WTC11 (cell line): ENCODE measurements at regions of chr17 and their contacts with region 1.

Region 1: DNA sequence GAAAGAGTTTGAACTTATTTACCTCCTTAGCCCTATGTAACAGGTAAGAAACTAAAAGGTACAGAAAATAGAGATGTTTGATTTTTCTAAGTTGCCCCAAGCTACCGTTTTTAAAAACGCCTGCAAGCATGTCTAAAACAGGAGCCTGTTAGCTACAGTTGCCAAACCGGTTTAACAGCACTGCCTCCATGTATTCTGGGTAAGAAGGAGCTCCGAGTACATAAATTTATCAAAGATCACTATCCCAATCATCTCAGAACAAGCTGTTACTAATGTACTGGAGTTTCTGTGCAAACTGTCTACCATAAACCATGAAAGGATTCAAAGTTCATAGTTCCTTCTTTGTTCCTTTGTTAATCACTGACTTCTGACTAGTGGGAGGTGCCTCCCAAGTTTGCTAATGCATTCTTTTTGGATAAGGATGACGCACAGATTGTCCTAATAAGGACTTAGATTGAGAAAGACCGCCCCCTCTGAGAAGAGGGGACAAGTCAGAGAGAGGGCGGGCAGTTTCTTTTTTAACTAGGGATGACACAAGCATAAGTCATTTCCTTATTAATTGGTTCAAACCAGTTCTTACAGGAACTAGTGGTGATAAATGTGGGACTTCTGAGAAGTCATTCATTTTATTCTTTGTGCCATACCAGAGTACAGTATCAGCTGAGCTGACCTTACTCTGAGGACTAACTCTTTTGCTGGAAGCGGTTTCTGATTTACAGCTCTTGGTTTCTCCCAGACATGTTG is 55.3 kb downstream of the TUBD1 start:
- DNase-seq: peak; percentile 54
- ATAC-seq: peak; percentile 87
- H3K4me3 Mint-ChIP-seq: peak overlapping the region; percentile 94
- H3K27ac Mint-ChIP-seq: peak overlapping the region; percentile 99
- H3K4me1 Mint-ChIP-seq: peaks cover 49% of the 10 kb centered on the region
- H3K27me3 Mint-ChIP-seq: no peaks in the 10 kb centered on the region
- CTCF ChIP-seq: no peak

Region 2: GRCh38 chr17:59707114-59707970 is 130.1 kb before region 1 on chr17 and contains the starts of genes PTRH2 and VMP1:
- CTCF ChIA-PET with region 1: interaction called, 3 read pairs
- POLR2A ChIA-PET with region 1: interaction called, 10 read pairs
- DNase-seq: peak; percentile 98
- ATAC-seq: peak; percentile 99
- H3K4me3 Mint-ChIP-seq: peak within 1 kb of the TSS; percentile 98
- H3K27ac Mint-ChIP-seq: peak within 1 kb of the TSS; percentile 98
- H3K4me1 Mint-ChIP-seq: peaks cover 30% of the 10 kb centered on the region
- H3K27me3 Mint-ChIP-seq: no peaks in the 10 kb centered on the region
- CTCF ChIP-seq: no peak
- total RNA-seq, gene PTRH2: 30.0 to 32.6 TPM (median 30.5 TPM) in 3 replicates
- total RNA-seq, gene VMP1: 72.8 to 79.1 TPM (median 72.9 TPM) in 3 replicates

Region 3: DNA sequence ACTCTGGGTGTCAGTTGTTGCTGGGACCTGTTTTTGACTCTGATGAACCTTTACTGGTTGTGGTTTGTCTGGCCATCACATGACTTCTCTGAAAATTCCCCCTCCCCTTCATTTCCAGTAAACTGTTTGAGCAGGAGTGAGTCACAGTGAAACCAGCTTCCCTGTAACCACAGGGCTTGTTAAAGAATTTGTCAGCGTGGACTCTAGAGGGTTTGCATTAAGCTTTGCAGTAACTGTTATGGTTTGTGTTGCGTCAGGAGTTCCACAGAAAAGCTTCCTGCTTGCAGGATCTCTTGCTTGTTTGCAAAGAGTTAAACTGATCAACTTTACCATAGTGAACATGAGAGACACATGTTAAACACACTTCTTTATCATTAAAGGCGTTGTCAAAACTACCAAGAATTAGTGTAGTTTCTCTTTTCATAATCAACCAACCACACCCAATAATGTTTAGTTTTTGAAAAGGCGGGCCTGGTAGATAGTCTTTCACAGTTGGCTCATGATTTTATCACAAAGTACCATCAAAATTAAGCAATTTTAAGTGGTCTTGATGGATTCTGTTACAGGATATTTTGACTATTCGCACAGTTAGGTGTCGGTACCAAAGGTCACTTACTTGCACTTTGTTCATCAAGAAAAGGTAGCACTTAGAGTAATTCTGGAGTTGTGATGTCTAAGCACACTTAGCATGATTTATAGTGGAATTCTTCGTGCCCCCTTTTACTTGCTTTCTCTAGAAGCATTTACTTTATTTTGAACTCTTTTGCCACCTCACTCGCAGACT is 50.8 kb before region 1 on chr17:
- CTCF ChIA-PET with region 1: no interaction called
- POLR2A ChIA-PET with region 1: interaction called, 23 read pairs
- DNase-seq: no peak
- ATAC-seq: peak; percentile 83
- H3K4me3 Mint-ChIP-seq: no peak overlapping the region
- H3K27ac Mint-ChIP-seq: peak overlapping the region; percentile 91
- H3K4me1 Mint-ChIP-seq: peaks cover 39% of the 10 kb centered on the region
- H3K27me3 Mint-ChIP-seq: no peaks in the 10 kb centered on the region
- CTCF ChIP-seq: no peak

Region 4: DNA sequence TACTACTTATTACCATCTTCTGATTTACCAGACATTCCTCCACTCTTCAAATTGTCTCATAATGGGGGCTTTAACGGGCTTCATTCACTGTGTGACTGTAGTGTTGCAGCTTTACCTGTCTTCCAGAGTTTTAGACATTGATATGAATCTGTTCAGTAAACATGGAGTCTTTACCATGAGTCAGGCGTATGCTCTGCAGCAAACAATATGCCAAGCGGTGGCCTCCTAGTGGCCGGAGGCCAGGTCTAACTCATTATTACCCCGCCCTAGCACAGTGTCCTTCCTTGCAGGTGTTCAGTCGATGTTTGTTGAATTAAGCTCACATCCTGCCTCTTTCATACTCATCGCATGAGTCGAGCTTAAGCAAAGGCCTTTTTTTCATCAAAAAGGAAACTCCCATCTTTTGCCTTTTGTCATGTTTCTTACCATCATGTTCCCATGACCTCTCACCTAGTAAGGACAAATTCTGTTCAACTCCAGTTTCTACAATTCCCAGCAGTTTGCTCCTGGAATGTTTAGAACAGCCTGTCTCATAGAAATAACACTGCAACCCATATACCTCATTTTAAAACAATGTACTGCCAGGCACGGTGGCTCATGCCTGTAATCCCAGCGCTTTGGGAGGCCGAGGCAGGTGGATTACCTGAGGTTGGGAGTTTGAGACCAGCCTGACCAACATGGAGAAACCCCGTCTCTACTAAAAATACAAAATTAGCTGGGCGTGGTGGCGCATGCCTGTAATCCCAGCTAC is 15.9 kb after region 1 on chr17:
- CTCF ChIA-PET with region 1: interaction called, 13 read pairs
- POLR2A ChIA-PET with region 1: interaction called, 12 read pairs
- DNase-seq: peak; percentile 56
- ATAC-seq: peak; percentile 92
- H3K4me3 Mint-ChIP-seq: no peak overlapping the region
- H3K27ac Mint-ChIP-seq: peak overlapping the region; percentile 86
- H3K4me1 Mint-ChIP-seq: peaks cover 43% of the 10 kb centered on the region
- H3K27me3 Mint-ChIP-seq: no peaks in the 10 kb centered on the region; the same call in 1 of the 2 replicates
- CTCF ChIP-seq: no peak

Region 5: DNA sequence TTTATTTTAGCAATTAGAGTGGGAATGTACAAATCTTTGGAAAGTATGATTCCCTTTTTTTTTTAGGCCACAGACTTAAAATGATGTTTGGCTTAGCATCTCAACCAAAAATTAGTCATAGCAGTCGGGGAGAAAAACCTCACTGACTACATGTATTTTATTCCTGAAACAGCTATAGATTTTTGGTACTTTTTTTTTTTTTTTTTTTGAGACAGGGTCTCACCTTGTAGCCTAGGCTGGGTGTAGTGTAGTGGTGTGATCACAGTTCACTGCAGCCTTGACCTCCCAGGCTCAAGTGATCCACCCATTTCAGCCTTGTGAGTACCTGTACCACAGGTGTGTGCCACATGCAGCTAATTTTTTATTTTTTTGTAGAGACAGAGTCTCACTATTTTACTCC is 103.7 kb after region 1 on chr17:
- CTCF ChIA-PET with region 1: no interaction called
- POLR2A ChIA-PET with region 1: no interaction called
- DNase-seq: no peak
- ATAC-seq: no peak
- H3K4me3 Mint-ChIP-seq: no peak overlapping the region
- H3K27ac Mint-ChIP-seq: no peak overlapping the region
- H3K4me1 Mint-ChIP-seq: no peaks in the 10 kb centered on the region
- H3K27me3 Mint-ChIP-seq: no peaks in the 10 kb centered on the region
- CTCF ChIP-seq: no peak